Endothelial cell of umbilical vein (primary cell): ENCODE measurements at regions of chr1 and their contacts with region 1.

Region 1: DNA sequence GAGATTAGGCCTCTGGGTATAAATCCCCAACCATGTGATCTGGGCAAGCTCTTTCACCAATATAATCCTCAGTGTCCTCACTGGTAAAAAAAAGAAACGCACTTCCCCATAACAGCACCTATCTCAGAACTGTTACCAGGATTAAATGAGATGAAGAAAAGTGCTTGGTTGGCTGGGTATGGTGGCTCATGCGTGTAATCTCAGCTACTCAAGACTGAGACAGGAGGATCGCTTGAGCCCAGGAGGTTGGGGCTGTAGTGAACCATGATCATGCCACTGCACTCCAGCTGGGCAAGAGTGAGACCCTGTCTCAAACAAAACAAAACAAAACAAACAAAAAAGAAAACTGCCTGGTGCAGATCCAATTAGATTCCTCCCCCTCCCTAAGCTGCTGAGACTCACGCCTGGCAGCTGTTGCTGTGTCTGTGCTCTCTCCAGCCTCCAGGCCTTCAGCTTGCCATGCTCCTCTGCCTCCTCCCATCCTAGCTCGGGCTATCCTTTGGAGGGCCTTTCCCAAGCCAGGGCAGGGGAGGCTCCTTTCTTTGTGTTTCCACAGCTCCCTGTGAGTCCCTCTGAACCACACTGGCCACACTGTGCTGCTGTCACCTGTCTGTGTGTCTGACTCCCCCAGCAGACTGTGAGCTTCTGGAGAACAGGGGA is 19.0 kb downstream of the CYB5RL start:
- DNase-seq: no peak
- H3K4me3 ChIP-seq: no peak overlapping the region
- H3K27ac ChIP-seq: no peak overlapping the region
- H3K4me1 ChIP-seq: peaks cover 5% of the 10 kb centered on the region
- H3K27me3 ChIP-seq: no peaks in the 10 kb centered on the region
- CTCF ChIP-seq: no peak
- POLR2A ChIP-seq: no peak

Region 2: GRCh38 chr1:54137514-54138061 is 43.2 kb before region 1 on chr1:
- CTCF ChIA-PET with region 1: interaction called, 10 read pairs
- POLR2A ChIA-PET with region 1: no interaction called
- dilution Hi-C with region 1: no loop called
- intact Hi-C with region 1: no loop called
- DNase-seq: peak; percentile 86
- H3K4me3 ChIP-seq: no peak overlapping the region
- H3K27ac ChIP-seq: no peak overlapping the region
- H3K4me1 ChIP-seq: peaks cover 10% of the 10 kb centered on the region
- H3K27me3 ChIP-seq: no peaks in the 10 kb centered on the region
- CTCF ChIP-seq: no peak
- POLR2A ChIP-seq: no peak

Region 3: DNA sequence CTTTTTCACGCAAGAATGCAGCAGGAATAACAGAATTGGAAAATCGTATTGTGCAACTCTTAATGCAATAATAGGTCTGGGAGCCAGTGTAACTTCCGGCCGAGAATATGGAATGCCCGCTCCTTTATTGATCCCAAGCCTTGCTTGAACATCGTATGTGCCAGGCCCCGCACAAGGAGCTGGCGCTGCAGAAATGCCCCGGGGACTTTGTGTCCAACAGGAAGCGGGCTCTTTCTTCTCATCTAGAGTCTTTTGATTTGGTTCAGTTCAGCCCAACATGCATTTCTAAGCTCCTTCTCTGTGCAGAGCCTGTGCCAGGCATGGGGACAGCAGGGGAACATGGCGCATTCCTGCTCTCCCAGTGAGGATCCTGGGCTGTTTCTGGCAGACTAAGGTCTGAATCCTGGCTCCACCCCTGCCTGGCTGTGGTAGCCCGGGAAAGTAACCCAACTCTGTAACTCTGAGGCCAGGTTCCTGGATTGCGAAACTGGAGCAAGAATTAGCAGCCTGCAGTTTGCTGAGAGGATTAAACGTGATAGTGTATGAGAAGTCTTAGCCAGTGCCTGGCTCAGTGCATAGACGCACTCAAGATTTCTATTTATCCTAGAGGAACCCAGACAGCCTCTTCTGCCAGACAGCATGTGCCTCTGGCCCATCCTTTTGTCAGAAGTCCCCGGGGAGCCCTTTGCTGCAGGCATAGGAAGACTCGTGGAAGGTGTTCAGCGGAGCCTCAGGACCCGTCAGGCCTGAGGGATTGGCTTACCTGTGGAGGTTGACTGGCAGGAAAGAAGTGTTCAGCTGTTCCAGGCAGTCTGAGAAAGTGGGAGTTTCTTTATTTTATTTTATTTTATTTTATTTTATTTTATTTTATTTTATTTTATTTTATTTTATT is 27.0 kb before region 1 on chr1:
- CTCF ChIA-PET with region 1: no interaction called
- POLR2A ChIA-PET with region 1: no interaction called
- dilution Hi-C with region 1: no loop called
- intact Hi-C with region 1: no loop called
- DNase-seq: no peak
- H3K4me3 ChIP-seq: no peak overlapping the region
- H3K27ac ChIP-seq: no peak overlapping the region
- H3K4me1 ChIP-seq: no peaks in the 10 kb centered on the region
- H3K27me3 ChIP-seq: peaks cover 0 to 3% of the 10 kb centered on the region in 2 experiments
- CTCF ChIP-seq: no peak
- POLR2A ChIP-seq: no peak

Region 4: DNA sequence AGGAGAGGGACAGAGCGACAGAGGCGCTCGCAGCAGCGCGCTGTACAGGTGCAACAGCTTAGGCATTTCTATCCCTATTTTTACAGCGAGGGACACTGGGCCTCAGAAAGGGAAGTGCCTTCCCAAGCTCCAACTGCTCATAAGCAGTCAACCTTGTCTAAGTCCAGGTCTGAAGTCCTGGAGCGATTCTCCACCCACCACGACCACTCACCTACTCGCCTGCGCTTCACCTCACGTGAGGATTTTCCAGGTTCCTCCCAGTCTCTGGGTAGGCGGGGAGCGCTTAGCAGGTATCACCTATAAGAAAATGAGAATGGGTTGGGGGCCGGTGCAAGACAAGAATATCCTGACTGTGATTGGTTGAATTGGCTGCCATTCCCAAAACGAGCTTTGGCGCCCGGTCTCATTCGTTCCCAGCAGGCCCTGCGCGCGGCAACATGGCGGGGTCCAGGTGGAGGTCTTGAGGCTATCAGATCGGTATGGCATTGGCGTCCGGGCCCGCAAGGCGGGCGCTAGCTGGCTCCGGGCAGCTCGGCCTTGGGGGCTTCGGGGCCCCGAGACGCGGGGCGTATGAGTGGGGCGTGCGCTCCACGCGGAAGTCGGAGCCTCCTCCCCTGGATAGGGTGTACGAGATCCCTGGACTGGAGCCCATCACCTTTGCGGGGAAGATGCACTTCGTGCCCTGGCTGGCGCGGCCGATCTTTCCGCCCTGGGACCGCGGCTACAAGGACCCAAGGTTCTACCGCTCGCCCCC is 19.1 kb after region 1 on chr1 and contains the starts of genes CYB5RL and MRPL37:
- CTCF ChIA-PET with region 1: interaction called, 12 read pairs
- POLR2A ChIA-PET with region 1: no interaction called
- dilution Hi-C with region 1: no loop called
- intact Hi-C with region 1: no loop called
- DNase-seq: peak; percentile 97
- H3K4me3 ChIP-seq: peak within 1 kb of the TSS; percentile 58 to 67 (median 58)
- H3K27ac ChIP-seq: peak within 1 kb of the TSS; percentile 55
- H3K4me1 ChIP-seq: peaks cover 19% of the 10 kb centered on the region
- H3K27me3 ChIP-seq: no peaks in the 10 kb centered on the region
- CTCF ChIP-seq: no peak
- POLR2A ChIP-seq: peak; percentile 83
- total RNA-seq, gene CYB5RL: 8.6 and 9.6 TPM in 2 replicates
- total RNA-seq, gene MRPL37: 109 TPM in 2 replicates